B cell (primary cell): ENCODE measurements at regions of chr12 and their contacts with region 1.

Region 1: GRCh38 chr12:110742718-110743570 is at the start of gene PPP1CC:
- DNase-seq: peak; percentile 97
- ATAC-seq: peak; percentile 95
- H3K4me3 ChIP-seq: peak within 1 kb of the TSS; percentile 86 to 94 (median 92)
- H3K4me3 Mint-ChIP-seq: peak within 1 kb of the TSS; percentile 99
- H3K27ac ChIP-seq: peak within 1 kb of the TSS; percentile 31 to 78
- H3K27ac Mint-ChIP-seq: peak within 1 kb of the TSS; percentile 95
- H3K4me1 ChIP-seq: peaks cover 32 to 36% of the 10 kb centered on the region in 2 donors
- H3K4me1 Mint-ChIP-seq: peaks cover 40% of the 10 kb centered on the region
- H3K27me3 ChIP-seq: no peaks in the 10 kb centered on the region
- H3K27me3 Mint-ChIP-seq: no peaks in the 10 kb centered on the region
- CTCF ChIP-seq: no peak
- total RNA-seq, gene PPP1CC: 146 and 150 TPM in 2 replicates

Region 2: GRCh38 chr12:110613771-110614684 is 128.9 kb before region 1 on chr12 and contains the start of gene TCTN1:
- CTCF ChIA-PET with region 1: no interaction called
- POLR2A ChIA-PET with region 1: no interaction called
- intact Hi-C with region 1: loop called (anchors 2 kb)
- DNase-seq: peak; percentile 94
- ATAC-seq: peak; percentile 99
- H3K4me3 ChIP-seq: peak within 1 kb of the TSS; percentile 57 to 84 (median 70)
- H3K4me3 Mint-ChIP-seq: peak within 1 kb of the TSS; percentile 91
- H3K27ac ChIP-seq: peak within 1 kb of the TSS; percentile 83 to 98
- H3K27ac Mint-ChIP-seq: peak within 1 kb of the TSS; percentile 96
- H3K4me1 ChIP-seq: peaks cover 42 to 65% of the 10 kb centered on the region in 2 donors
- H3K4me1 Mint-ChIP-seq: peaks cover 49% of the 10 kb centered on the region
- H3K27me3 ChIP-seq: no peaks in the 10 kb centered on the region
- H3K27me3 Mint-ChIP-seq: no peaks in the 10 kb centered on the region
- CTCF ChIP-seq: no peak
- total RNA-seq, gene TCTN1: 69.8 and 74.5 TPM in 2 replicates

Region 3: GRCh38 chr12:110836291-110836690 is 93.3 kb after region 1 on chr12:
- CTCF ChIA-PET with region 1: no interaction called
- POLR2A ChIA-PET with region 1: no interaction called
- intact Hi-C with region 1: no loop called
- DNase-seq: no peak
- ATAC-seq: no peak
- H3K4me3 ChIP-seq: no peak overlapping the region
- H3K4me3 Mint-ChIP-seq: no peak overlapping the region
- H3K27ac ChIP-seq: no peak overlapping the region
- H3K27ac Mint-ChIP-seq: no peak overlapping the region
- H3K4me1 ChIP-seq: no peaks in the 10 kb centered on the region
- H3K4me1 Mint-ChIP-seq: no peaks in the 10 kb centered on the region
- H3K27me3 ChIP-seq: no peaks in the 10 kb centered on the region
- H3K27me3 Mint-ChIP-seq: peaks cover 10% of the 10 kb centered on the region
- CTCF ChIP-seq: no peak